ENCODE measurements at regions of chr7 and their contacts with region 1.

Region 1: DNA sequence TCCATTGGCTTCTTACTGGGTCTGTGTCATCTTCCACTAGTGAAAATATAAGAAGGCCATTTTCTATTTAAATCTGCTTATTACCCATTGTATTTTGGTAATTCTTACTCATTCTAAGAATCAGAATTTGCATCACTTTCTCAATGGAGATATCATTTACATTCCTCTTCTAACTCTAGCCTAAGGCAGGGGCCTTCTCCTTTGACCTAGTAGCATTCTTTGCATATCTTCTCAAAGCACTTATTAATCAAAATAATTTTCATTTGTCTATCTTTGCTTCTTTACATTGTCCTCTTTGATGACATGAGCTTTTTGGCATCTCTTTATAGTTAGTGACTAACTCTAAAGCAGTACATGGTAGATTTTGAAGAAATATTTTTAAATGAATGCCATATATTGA is 400.9 kb upstream of the SEMA3D start:
- DNase-seq: no peak
- H3K4me3 ChIP-seq: no peak overlapping the region
- H3K27ac ChIP-seq: no peak overlapping the region
- H3K4me1 ChIP-seq: no peaks in the 10 kb centered on the region
- H3K27me3 ChIP-seq: no peaks in the 10 kb centered on the region
- CTCF ChIP-seq: no peak
- POLR2A ChIP-seq: no peak

Region 2: DNA sequence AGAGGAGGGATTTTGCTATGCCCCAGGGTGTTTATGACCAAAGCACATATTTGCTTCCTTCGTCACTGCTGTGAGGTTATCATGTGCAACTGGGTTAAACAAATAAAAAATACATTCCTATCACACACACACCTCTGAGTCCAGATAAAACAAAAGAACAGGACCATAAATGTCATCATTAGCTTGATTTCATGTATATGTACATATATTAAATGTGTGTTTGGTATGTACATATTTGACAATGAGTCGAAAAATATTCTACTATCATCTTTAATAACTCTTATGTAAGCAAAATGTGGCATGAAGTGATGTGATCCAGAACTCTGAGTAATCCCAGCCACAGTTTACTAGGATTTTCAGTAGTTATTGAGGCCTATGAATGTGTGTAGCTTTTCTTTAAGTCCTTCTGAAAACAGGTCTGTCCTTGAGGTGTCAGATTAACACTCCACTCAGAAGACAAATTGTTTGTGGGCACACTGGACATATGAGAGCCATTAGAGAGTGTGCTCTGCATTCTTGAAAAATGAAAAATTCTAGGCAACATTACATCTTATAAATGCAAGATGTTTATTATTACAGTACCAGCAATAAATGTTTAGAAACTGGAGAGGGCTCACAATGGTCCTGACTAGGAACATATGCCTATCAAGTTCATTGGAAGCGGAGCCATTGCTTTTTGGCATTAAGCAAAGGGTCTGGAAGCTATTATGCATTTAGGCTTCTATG is 1058.1 kb before region 1 on chr7:
- intact Hi-C with region 1: loop called (anchors 10 kb)
- DNase-seq: no peak
- H3K4me3 ChIP-seq: no peak overlapping the region
- H3K27ac ChIP-seq: no peak overlapping the region
- H3K4me1 ChIP-seq: no peaks in the 10 kb centered on the region
- H3K27me3 ChIP-seq: no peaks in the 10 kb centered on the region
- CTCF ChIP-seq: no peak
- POLR2A ChIP-seq: no peak

Region 3: DNA sequence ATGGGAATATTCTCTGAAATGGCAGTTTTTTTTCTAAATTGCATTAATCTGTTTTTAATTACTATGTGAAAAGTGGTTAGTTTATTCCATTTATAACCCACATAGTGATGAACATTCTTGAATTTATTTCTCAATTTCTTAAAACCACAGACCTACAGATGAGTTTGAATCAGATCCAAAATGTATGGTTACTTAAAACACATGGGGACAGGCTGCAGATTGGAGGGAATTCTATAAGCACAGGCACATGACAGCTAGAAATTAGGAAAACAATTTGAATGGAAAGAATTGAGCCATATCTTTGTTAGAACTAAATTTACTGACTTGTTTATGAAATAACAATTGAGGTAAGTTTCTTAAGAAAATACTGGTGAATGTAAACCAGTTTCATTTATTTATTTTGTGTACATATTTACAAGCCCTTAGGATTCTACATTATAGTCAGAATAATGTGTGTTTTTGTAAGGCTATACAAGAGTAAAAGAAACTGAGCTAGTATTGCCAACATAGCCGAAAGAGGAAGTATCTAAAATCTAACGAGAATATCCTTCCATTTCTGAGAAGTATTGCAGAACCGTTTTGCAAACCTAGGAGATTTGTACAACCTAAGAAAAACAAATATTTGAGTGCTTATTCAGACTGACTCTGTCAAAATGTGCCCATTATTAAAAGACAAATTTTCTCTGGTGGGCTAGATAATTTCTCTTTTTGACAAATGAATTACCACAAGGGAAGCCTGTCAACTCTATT is 33.3 kb after region 1 on chr7:
- intact Hi-C with region 1: no loop called
- DNase-seq: no peak
- H3K4me3 ChIP-seq: no peak overlapping the region
- H3K27ac ChIP-seq: no peak overlapping the region
- H3K4me1 ChIP-seq: no peaks in the 10 kb centered on the region
- H3K27me3 ChIP-seq: no peaks in the 10 kb centered on the region
- CTCF ChIP-seq: no peak
- POLR2A ChIP-seq: no peak